Head of caudate nucleus (tissue), 42 donors: ENCODE measurements at regions of chr6 and their contacts with region 1.

Region 1: DNA sequence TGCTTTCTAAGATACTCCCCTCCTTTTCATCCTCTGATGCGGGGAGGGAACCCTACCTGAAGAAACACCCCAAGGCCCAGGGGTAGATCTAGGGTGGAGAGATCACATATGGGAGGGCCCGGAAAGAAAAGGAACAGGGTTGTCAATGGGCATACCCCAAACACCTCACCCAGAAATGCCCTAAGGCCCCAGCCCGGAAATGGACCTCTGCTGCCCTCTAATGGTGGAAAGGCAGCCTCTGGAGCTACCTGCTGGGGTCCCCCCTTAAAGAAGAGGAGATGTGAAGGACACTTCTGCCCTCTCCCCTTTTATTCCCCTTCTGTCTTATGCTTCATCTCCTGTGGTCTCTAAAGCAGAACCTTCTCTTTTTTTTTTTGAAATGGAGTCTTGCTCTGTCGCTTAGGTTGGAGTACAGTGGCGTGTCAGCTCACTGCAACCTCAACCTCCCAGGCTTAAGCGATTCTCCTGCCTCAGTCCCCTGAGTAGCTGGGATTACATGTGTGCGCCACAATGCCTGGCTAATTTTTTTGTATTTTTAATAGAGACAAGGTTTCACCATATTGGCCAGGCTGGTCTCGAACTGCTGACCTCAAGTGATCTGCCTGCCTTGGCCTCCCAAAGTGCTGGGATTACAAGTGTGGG is 458 bp upstream of the ARMC12 start:
- DNase-seq: peak in 41 of 42 donors; percentile 74 to 94 (median 84)

Region 2: DNA sequence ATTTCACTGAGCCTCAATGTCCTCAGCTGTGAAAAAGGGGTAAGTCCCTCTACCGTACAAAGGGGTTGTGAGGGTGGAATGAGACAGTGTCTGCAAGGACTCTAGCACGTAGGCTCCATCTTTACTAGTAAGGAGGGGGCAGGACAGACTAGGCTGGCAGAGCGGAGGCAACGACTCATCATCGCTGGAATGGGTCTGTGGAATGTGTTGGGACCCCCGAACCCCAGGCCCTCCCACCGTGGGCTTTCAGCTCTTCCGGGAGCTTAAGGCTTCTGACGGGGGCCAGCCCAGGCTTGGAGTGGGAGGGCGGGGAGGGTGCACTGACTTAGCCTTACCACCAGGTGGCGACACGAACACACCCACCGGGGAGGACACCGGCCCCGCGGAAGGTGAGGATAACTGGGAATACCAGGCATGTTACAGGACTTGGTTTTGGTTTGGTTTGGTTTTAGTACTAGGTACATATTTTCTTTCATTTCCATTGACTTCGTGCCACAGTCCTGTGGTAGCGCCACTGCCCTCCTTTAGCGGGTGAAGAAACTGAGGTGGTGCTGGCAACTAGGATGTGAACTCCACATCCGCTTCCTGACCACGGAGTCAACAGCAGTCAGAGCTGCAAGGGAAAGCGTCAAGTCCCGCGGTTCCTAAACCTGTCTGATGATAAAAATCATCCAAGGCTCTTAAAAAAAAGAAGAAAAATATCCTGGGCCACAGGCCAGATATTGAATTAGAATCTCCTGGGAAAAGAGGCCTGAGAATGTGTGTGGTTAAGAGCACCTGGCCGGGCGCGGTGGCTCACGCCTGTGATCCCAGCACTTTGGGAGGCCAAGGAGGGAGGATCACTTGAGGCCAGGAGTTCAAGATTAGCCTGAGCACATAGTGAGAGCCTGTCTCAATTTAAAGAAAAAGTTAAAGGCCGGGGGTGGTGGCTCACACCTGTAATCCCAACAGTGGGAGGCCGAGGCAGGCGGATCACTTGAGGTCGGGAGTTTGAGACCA is 213.4 kb before region 1 on chr6:
- intact Hi-C with region 1: loop called (anchors 2 kb)
- DNase-seq: peak; percentile 49 to 89 (median 68)

Region 3: DNA sequence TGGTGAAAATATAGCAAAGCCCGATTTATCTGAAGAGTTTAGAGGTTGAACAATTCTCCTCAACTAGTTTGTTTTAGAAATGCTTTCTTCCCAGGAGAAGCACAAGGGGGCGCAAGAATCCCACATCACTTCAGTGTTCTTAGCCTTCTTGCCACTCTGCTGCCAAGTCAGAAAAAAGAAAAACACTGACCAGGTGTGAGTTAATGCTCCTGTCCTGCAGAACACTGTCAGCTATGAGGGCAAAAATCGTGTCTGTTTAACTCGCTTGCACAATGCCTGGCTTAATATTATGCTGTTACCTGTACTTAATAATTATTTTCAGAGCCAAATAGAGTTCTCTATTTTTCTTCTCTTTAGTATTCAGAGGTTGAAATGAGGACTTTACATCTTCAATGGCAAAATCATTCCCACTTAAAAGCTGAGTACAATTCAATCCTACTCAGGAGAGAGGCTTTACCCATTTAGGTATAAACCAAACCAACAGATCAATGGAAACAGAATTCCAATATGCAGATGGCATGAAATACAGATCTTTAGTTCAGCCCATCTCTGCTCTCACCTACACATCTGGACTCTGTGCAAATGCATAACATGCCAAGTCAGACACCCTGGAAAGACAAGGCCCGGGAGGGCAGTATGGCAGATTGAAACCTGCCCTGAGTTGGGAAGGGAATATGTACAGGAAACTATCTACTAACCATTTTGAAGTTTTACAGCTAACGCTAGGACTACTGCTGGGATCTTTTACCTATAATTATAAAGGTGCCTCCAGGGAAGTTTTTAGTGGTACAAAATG is 152.3 kb before region 1 on chr6:
- intact Hi-C with region 1: loop called (anchors 2 kb)
- DNase-seq: peak; percentile 14 to 90 (median 78)

Region 4: DNA sequence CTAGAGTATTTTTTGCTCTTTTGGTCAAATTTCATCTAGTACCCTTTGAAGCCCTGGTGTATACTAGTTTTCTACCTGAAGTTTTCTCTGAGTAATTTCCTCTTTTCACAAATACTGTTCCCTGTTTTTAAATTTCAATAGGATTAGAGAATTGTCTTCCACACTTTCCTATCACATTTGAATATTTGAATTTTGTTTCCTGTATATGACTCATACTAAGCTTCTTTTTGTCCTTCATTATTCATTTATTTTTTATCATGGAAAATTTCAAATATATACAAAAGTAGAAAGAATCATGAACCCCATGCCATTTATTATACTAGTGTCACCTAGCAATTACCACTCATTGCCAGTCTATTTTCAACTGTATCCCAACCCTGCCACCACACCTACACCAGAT is 121.5 kb after region 1 on chr6:
- intact Hi-C with region 1: no loop called
- DNase-seq: no peak

Region 5: GRCh38 chr6:36120979-36121786 is 384.8 kb after region 1 on chr6:
- intact Hi-C with region 1: no loop called
- DNase-seq: no peak